Ascending aorta (tissue), 2 donors: ENCODE measurements at regions of chr17 and their contacts with region 1.

Region 1: GRCh38 chr17:48593840-48594537 is 410 bp upstream of the HOXB5 start:
- DNase-seq: peak in 1 of 2 donors; percentile 89
- H3K4me3 ChIP-seq: peak overlapping the region; percentile 49 to 65
- H3K27ac ChIP-seq: no peak overlapping the region
- H3K4me1 ChIP-seq: peaks cover 9 to 19% of the 10 kb centered on the region in 2 donors
- H3K27me3 ChIP-seq: no peaks in the 10 kb centered on the region
- CTCF ChIP-seq: peak; percentile 91 to 96 (median 96)

Region 2: DNA sequence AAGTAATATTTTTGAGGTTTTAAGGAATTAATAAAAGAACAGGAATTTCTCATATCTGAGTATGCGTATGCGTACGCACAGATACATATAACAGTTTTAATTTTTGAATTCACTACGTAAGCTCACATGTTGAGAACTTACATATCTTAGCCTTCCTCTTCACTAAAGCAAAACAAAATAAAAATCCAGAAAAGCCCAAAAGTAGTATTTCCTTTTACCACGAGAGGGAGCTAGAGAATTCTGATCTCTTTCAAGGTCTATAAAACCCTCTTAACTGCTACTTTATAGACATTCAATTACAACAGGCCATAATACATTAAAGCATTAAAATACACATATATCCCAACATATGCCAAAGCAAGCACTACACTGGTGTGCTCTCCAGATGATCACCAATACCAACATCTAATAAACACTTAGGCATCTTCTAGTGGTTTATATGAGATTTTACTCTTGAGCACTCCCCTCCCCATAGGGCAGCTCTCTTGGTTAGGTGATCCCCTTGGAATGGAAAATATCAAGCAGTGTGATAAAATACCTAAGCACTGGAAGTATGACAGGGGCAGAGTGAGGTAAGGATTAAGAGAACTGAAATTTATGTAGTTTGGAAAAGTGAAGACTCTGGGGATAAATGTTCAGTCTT is 258.0 kb before region 1 on chr17:
- intact Hi-C with region 1: loop called (anchors 2 kb)
- DNase-seq: no peak
- H3K4me3 ChIP-seq: no peak overlapping the region
- H3K27ac ChIP-seq: no peak overlapping the region
- H3K4me1 ChIP-seq: no peaks in the 10 kb centered on the region
- H3K27me3 ChIP-seq: no peaks in the 10 kb centered on the region
- CTCF ChIP-seq: peak; percentile 59 to 72 (median 68)

Region 3: GRCh38 chr17:48351831-48352332 is 242.1 kb before region 1 on chr17:
- intact Hi-C with region 1: loop called (anchors 2 kb)
- DNase-seq: no peak
- H3K4me3 ChIP-seq: no peak overlapping the region
- H3K27ac ChIP-seq: no peak overlapping the region
- H3K4me1 ChIP-seq: no peaks in the 10 kb centered on the region
- H3K27me3 ChIP-seq: no peaks in the 10 kb centered on the region
- CTCF ChIP-seq: peak; percentile 50 to 77 (median 67)

Region 4: GRCh38 chr17:48492401-48493298 is 101.3 kb before region 1 on chr17:
- intact Hi-C with region 1: loop called (anchors 2 kb)
- DNase-seq: peak in 1 of 2 donors; percentile 85
- H3K4me3 ChIP-seq: peak overlapping the region; percentile 41 to 60
- H3K27ac ChIP-seq: no peak overlapping the region
- H3K4me1 ChIP-seq: peaks cover 4 to 6% of the 10 kb centered on the region in 2 donors
- H3K27me3 ChIP-seq: no peaks in the 10 kb centered on the region
- CTCF ChIP-seq: peak; percentile 83 to 94 (median 90)